ENCODE measurements at regions of chr7 and their contacts with region 1.

Region 1: GRCh38 chr7:155344600-155345433 is 47.1 kb downstream of the INSIG1 start:
- DNase-seq: peak; percentile 73 to 85 (median 80)
- ATAC-seq: peak; percentile 98
- H3K4me3 ChIP-seq: no peak overlapping the region
- H3K27ac ChIP-seq: peak overlapping the region in 2 of 4 donors; percentile 37 to 63
- H3K4me1 ChIP-seq: peaks cover 14% of the 10 kb centered on the region
- H3K27me3 ChIP-seq: no peaks in the 10 kb centered on the region
- CTCF ChIP-seq: peak; percentile 66 to 99 (median 94)
- POLR2A ChIP-seq: no peak

Region 2: GRCh38 chr7:154913638-154914312 is 431.0 kb before region 1 on chr7:
- intact Hi-C with region 1: loop called (anchors 10 kb)
- DNase-seq: peak; percentile 90 to 96 (median 92)
- ATAC-seq: peak; percentile 95
- H3K4me3 ChIP-seq: no peak overlapping the region
- H3K27ac ChIP-seq: no peak overlapping the region
- H3K4me1 ChIP-seq: peaks cover 7% of the 10 kb centered on the region
- H3K27me3 ChIP-seq: no peaks in the 10 kb centered on the region
- CTCF ChIP-seq: peak; percentile 78 to 93 (median 90)
- POLR2A ChIP-seq: no peak

Region 3: DNA sequence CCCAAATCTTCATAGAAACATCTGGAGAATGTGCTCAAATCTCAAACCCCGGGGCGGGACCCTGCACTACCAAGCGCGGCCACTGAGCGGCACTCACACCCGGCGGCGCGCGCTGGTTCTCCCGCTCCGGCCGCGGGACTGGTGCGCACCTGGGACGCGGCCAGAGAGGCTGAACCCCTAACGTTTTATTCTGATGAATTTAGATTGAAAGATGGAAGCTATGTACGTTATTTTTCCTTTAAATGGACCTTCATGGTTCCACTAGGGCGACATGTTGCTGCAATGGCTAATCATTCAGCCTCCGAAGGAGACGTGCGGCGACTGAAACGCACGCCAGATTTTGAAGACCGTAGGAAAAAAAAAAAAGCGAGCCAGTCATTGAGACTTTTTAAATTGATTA is 154.1 kb before region 1 on chr7:
- intact Hi-C with region 1: loop called (anchors 5 kb)
- DNase-seq: peak; percentile 52 to 78 (median 63)
- ATAC-seq: peak; percentile 89
- H3K4me3 ChIP-seq: no peak overlapping the region
- H3K27ac ChIP-seq: peak overlapping the region in 1 of 4 donors; percentile 29
- H3K4me1 ChIP-seq: peaks cover 6% of the 10 kb centered on the region
- H3K27me3 ChIP-seq: no peaks in the 10 kb centered on the region
- CTCF ChIP-seq: peak; percentile 88 to 98 (median 95)
- POLR2A ChIP-seq: no peak